ENCODE measurements at regions of chr5 and their contacts with region 1.

Region 1: DNA sequence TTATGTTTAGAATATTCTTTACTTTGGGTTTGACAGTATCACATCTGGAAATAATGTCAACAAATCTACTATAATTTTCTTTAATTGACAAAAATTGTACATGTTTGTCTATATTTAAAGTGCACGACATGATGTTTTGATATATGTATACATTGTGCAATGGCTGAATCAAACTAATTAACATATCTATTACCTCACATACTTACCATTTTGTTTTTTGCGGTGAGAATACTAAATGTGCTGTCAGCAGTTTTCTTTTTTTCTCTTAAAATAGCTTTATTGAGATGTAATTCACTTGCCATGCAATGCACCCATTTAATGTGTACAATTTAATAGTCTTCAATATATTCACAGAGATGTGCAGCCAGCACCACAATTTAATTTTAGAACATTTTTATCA is 10.6 kb upstream of the C6 start:
- DNase-seq: no peak
- H3K4me3 ChIP-seq: no peak overlapping the region
- H3K27ac ChIP-seq: no peak overlapping the region
- H3K4me1 ChIP-seq: no peaks in the 10 kb centered on the region
- CTCF ChIP-seq: no peak

Region 2: GRCh38 chr5:40823459-40823858 is 400.5 kb before region 1 on chr5:
- CTCF ChIA-PET with region 1: no interaction called
- POLR2A ChIA-PET with region 1: no interaction called
- intact Hi-C with region 1: no loop called
- DNase-seq: no peak
- H3K4me3 ChIP-seq: no peak overlapping the region
- H3K27ac ChIP-seq: no peak overlapping the region
- H3K4me1 ChIP-seq: no peaks in the 10 kb centered on the region
- CTCF ChIP-seq: no peak

Region 3: GRCh38 chr5:40914835-40915234 is 309.1 kb before region 1 on chr5:
- CTCF ChIA-PET with region 1: no interaction called
- POLR2A ChIA-PET with region 1: no interaction called
- intact Hi-C with region 1: no loop called
- DNase-seq: no peak
- H3K4me3 ChIP-seq: no peak overlapping the region
- H3K27ac ChIP-seq: no peak overlapping the region
- H3K4me1 ChIP-seq: no peaks in the 10 kb centered on the region
- CTCF ChIP-seq: no peak

Region 4: DNA sequence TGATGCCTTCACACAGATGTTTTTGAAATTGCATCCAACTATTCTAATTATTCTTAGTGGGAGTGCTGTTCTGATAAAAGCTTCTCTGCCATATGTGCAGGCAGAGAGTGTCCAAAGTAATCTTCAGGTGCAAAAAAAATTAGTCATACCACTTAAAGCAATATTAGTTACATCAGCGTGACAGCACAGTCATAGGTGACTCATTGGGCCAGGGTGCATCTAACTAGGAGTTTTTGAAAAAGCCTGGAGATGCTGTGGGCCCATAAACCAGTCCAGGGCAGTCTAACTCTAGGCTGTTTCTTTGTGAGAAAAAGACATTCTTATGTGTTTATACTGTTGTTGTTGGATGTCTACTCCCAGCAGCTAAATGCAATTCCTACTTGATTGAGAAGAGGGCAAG is 22.4 kb after region 1 on chr5:
- CTCF ChIA-PET with region 1: no interaction called
- POLR2A ChIA-PET with region 1: no interaction called
- intact Hi-C with region 1: no loop called
- DNase-seq: no peak
- H3K4me3 ChIP-seq: no peak overlapping the region
- H3K27ac ChIP-seq: no peak overlapping the region
- H3K4me1 ChIP-seq: no peaks in the 10 kb centered on the region
- CTCF ChIP-seq: no peak

Region 5: DNA sequence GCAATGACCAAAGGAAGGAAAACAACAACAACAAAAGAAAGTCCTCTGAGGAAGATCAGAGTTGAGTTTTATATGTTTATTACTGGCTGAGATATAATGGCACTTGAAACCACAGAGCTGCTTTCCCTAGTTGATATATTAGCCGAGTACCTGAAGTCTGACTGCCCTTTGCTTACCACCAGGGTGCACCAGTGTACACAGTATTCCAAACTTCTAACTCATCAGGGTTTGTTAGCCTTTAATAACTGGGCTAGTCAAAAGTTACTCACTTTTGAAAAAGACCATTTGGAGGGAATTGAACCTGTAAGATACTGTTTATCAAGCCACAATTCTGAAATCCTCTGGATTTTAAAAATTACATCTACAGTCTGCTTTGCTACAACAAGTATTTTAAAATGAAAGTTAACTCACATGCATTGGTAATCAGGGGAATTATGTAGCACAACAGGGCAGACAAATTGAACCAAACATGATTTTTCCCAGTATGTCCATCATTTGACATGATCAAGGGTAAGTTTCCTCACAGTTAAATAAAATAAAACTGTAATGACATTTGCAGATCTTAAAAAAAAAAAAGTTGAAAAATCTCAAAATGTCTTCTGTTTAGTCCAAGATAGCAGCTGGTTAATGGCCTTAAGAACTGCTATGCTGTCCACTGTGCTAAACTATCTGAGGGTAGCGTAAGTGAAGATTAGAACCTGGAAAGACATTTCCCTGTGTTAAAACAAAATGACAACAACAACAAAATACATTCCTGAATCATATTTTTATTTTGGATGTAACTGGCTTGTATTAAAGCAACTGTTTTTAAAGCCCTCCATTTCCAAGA is 46.7 kb after region 1 on chr5:
- CTCF ChIA-PET with region 1: no interaction called
- POLR2A ChIA-PET with region 1: no interaction called
- intact Hi-C with region 1: loop called (anchors 1 kb)
- DNase-seq: peak; percentile 21
- H3K4me3 ChIP-seq: no peak overlapping the region
- H3K27ac ChIP-seq: no peak overlapping the region
- H3K4me1 ChIP-seq: no peaks in the 10 kb centered on the region
- CTCF ChIP-seq: peak; percentile 72

Measured in OCI-LY7 (cell line).